AG04450 (cell line): ENCODE measurements at regions of chr3 and their contacts with region 1.

Region 1: DNA sequence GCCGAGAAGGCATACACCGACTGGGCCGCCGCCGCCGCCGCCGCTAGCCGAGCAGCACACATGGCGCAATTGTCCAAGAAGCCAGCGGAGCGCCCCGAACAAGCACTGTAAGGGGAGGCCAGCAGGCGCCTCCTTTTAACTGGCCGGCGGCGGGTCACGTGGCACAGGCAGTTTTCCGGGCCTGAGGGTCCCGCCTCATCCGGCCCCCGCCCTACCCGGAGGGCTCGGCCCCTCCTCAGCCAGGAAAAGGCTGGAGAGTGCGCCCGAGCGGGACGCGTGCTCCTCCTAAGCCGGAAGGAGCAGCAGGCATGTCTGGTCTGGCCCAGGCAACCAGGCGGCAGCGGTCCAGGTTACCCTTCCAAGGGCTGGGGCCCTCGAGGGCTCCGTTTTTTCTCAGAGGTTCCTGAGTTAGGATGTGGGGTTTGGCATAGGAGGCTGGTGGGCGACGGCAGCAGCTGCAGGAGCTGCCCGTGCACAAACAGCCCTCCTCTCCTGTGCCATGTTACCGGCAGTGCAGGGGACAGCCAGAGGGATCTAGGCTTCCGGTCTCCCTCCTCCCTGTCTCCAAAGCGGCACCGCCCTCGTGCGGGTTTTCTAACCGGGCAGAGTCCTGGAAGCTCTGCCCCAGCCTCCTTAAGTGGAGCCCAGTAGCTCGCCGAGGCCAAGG is at the start of gene GPX1:
- DNase-seq: peak; percentile 90
- H3K4me3 ChIP-seq: peak within 1 kb of the TSS; percentile 71
- H3K27ac ChIP-seq: peak within 1 kb of the TSS; percentile 93
- H3K27me3 ChIP-seq: no peaks in the 10 kb centered on the region
- CTCF ChIP-seq: no peak
- polyA plus RNA-seq, gene GPX1: 434 and 693 TPM in 2 replicates

Region 2: DNA sequence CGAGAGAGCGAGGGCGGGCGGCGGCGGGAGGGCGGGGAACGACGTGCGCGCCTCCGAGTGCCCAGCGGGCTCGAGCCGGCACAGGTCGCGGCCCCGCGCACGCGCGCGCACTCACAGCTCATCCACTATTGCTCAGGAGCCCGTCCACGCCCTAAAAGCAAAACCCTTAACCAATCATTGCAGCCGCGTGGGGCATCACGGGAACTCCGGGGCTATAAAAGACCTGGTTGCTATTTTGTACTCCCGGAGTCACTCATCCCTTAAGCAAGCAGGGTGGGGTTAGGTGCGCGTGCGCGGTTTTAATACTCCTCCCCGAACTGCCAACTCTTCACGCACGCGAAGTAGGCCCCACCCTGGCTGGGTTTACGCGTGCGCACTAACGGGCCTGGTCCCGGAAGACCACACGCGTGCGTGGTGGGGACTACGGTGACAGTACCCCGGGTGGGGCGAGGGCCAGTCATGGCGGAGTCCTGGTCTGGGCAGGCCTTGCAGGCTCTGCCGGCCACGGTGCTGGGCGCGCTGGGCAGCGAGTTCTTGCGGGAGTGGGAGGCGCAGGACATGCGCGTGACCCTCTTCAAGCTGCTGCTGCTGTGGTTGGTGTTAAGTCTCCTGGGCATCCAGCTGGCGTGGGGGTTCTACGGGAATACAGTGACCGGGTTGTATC is 53.8 kb after region 1 on chr3 and contains the starts of genes RHOA and TCTA:
- CTCF ChIA-PET with region 1: no interaction called
- POLR2A ChIA-PET with region 1: interaction called, 10 read pairs
- DNase-seq: peak; percentile 100
- H3K4me3 ChIP-seq: peak within 1 kb of the TSS; percentile 97
- H3K27ac ChIP-seq: peak within 1 kb of the TSS; percentile 70
- H3K27me3 ChIP-seq: no peaks in the 10 kb centered on the region
- CTCF ChIP-seq: no peak
- polyA plus RNA-seq, gene RHOA: 466 and 505 TPM in 2 replicates
- polyA plus RNA-seq, gene TCTA: 30.4 and 32.0 TPM in 2 replicates

Region 3: DNA sequence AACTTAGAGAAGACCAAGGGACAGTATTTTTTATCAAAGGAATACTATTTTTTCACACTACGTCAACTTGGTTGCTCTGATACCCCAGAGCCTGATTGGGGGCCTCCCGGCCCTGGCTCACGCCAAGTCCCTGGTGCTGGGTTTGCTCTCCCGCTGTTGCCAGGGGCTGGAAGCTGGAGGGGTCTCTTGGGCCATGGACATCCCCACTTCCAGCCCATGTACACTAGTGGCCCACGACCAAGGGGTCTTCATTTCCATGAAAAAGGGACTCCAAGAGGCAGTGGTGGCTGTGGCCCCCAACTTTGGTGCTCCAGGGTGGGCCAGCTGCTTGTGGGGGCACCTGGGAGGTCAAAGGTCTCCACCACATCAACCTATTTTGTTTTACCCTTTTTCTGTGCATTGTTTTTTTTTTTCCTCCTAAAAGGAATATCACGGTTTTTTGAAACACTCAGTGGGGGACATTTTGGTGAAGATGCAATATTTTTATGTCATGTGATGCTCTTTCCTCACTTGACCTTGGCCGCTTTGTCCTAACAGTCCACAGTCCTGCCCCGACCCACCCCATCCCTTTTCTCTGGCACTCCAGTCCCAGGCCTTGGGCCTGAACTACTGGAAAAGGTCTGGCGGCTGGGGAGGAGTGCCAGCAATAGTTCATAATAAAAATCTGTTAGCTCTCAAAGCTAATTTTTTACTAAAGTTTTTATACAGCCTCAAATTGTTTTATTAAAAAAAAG is 175.6 kb after region 1 on chr3:
- CTCF ChIA-PET with region 1: no interaction called
- POLR2A ChIA-PET with region 1: no interaction called
- DNase-seq: no peak
- H3K4me3 ChIP-seq: no peak overlapping the region
- H3K27ac ChIP-seq: no peak overlapping the region
- H3K27me3 ChIP-seq: no peaks in the 10 kb centered on the region
- CTCF ChIP-seq: no peak

Region 4: DNA sequence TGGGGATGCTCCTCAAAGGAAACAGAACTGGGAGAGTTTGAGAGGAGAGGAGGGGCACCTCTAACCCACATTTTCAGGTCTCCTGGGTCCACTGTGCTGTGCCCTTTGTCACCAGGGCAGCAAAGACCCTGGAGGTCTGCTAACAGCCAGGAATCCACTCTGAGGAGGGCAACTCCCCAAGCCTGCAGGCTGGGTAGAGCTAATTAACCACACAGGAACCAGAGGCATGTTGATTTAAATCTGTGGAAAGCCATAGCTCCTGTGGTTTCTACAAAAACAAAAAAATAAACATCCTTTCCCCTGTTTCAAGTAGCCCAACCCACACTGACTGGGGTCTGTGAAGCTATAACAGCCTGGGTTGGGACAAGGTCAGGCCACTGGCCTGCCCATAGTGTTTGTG is 193.7 kb after region 1 on chr3:
- CTCF ChIA-PET with region 1: no interaction called
- POLR2A ChIA-PET with region 1: no interaction called
- DNase-seq: no peak
- H3K4me3 ChIP-seq: no peak overlapping the region
- H3K27ac ChIP-seq: no peak overlapping the region
- H3K27me3 ChIP-seq: peaks cover 32% of the 10 kb centered on the region
- CTCF ChIP-seq: no peak